ENCODE measurements at regions of chr14 and their contacts with region 1.

Region 1: GRCh38 chr14:92585981-92586937 is 72.7 kb downstream of the RIN3 start:
- DNase-seq: peak; percentile 36
- H3K4me3 Mint-ChIP-seq: peak overlapping the region; percentile 67
- H3K27ac Mint-ChIP-seq: peak overlapping the region; percentile 82
- H3K4me1 Mint-ChIP-seq: peaks cover 83% of the 10 kb centered on the region
- H3K27me3 Mint-ChIP-seq: peaks cover 2% of the 10 kb centered on the region

Region 2: DNA sequence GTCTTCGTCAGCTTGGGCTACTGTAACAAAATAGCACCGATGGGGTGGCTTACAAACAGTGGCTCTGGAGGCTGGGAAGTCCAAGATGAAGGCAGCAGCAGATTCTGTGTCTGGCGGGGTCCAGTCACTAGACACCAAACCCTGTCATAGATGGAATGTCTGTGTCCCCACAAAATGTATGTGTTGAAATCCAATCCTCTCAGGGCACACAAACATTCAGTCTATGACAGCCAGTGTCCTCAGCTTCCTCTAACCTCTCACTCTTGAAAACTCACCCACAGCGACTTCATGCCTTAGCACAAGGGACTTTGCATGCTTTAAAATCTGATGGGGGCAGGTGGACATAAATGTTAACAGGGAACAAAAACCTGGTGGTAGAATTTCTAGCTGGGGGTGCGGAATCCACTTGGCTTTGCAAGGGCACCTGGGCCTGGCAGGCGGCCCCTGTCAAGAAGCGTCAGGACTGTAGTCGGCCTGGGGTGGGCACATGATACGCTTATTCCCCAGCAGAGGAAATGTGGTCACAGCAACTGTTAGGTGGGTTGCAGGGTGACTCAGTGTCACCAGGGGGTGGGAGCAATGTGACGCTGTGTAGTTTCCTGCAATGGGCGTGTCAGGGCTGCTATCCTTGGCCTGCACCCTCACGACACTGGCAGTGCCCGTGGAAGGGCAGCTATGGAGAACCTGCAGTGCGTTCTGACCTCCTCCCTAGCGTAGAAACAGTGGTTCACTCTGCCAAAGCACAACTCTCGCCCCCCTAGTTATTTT is 55.0 kb before region 1 on chr14:
- intact Hi-C with region 1: loop called (anchors 10 kb)
- DNase-seq: no peak
- H3K4me3 Mint-ChIP-seq: peak overlapping the region; percentile 47
- H3K27ac Mint-ChIP-seq: peak overlapping the region; percentile 91
- H3K4me1 Mint-ChIP-seq: peaks cover 46% of the 10 kb centered on the region
- H3K27me3 Mint-ChIP-seq: peaks cover 7% of the 10 kb centered on the region

Region 3: GRCh38 chr14:92556255-92556741 is 30.0 kb before region 1 on chr14:
- intact Hi-C with region 1: loop called (anchors 1 kb)
- DNase-seq: no peak
- H3K4me3 Mint-ChIP-seq: peak overlapping the region; percentile 28
- H3K27ac Mint-ChIP-seq: peak overlapping the region; percentile 92
- H3K4me1 Mint-ChIP-seq: peaks cover 71% of the 10 kb centered on the region
- H3K27me3 Mint-ChIP-seq: no peaks in the 10 kb centered on the region